Aorta (tissue), 5 donors: ENCODE measurements at regions of chr17 and their contacts with region 1.

Region 1: DNA sequence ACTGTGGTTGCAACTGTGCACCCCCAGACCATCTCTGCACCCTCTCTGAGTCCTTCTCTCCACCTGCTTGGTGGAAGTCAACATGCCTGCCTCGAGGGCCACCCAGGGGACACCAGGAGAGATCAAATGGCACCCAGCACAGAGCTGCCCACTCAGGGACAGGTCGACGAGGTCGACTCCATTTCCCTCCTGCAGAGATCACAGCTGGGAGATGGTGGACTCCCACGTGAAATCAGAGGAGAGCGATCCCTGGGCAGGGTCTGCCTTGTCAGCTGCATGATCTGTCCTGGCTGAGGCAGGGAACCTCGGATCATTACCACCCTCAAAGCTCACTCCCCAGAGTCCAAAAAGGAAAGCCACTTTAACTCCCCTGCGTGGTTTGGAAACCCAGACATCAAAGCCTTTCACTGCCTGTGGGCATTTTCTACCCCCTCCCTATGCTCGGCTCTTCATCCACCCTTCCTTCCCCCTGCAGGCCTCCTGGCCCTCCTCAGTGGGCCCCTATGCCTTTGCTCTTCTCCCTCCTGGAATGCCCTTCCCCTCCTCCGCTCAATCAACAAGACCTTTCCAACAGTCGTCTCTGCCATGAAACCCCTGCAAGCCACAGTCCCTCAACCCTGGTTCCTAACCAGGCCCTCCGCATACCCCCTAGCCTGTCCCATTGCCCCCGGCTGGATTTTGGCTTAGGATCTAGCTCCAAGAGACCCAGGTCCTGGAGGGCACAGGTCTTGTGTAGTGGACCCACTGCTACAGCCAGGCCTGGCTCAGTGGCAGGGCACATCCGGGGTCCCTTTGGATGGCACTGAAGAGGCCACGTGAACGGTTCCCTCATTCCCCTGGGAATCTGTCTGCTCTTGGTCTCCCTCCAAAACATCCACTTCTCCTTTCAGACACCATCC is 103.8 kb upstream of the RPL38 start:
- DNase-seq: no peak
- ATAC-seq: no peak
- H3K4me3 ChIP-seq: no peak overlapping the region
- H3K27ac ChIP-seq: no peak overlapping the region
- H3K4me1 ChIP-seq: no peaks in the 10 kb centered on the region
- H3K27me3 ChIP-seq: no peaks in the 10 kb centered on the region

Region 2: GRCh38 chr17:73855720-73856333 is 243.9 kb before region 1 on chr17:
- intact Hi-C with region 1: loop called in 1 of 2 experiments (anchors 10 kb)
- DNase-seq: no peak
- ATAC-seq: no peak
- H3K4me3 ChIP-seq: no peak overlapping the region
- H3K27ac ChIP-seq: no peak overlapping the region
- H3K4me1 ChIP-seq: no peaks in the 10 kb centered on the region
- H3K27me3 ChIP-seq: no peaks in the 10 kb centered on the region

Region 3: DNA sequence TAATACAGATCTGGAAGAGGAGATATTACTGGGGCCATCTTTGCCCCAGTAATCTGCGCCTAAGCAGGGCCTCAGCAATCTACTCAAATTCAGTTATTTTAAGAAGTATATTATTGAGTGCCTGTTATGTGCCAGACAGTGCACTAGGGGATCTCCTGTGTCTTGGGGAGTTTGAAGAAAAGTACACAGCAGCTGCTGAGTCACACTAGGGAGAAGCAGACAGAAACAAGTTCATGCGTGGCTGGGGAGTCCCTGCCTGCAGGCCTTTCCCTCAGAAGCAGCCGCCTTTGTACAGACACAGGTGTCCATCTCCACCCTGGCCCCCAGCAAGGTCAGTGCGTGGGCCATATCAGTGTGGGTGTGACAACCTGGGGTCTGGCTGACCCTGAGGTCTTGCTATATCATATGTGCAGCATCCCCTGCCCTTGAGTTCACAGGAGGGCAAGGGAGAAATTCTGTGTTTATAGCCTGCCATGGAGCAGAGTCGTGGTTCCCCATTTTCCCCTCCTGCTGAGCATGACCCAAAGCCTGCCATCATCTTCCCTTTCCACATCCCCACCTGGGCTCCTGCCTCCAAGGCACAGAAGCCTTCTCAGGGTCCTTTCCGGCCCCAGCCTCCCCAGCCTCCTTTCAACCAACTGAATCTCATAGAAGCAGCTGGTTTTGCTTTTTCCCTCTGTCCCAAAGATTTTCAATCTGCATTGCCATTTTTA is 225.5 kb before region 1 on chr17:
- intact Hi-C with region 1: no loop called
- DNase-seq: no peak
- ATAC-seq: no peak
- H3K4me3 ChIP-seq: no peak overlapping the region
- H3K27ac ChIP-seq: no peak overlapping the region
- H3K4me1 ChIP-seq: no peaks in the 10 kb centered on the region
- H3K27me3 ChIP-seq: no peaks in the 10 kb centered on the region

Region 4: GRCh38 chr17:73956669-73957465 is 142.8 kb before region 1 on chr17:
- intact Hi-C with region 1: no loop called
- DNase-seq: no peak
- ATAC-seq: no peak
- H3K4me3 ChIP-seq: no peak overlapping the region
- H3K27ac ChIP-seq: no peak overlapping the region
- H3K4me1 ChIP-seq: no peaks in the 10 kb centered on the region
- H3K27me3 ChIP-seq: no peaks in the 10 kb centered on the region

Region 5: DNA sequence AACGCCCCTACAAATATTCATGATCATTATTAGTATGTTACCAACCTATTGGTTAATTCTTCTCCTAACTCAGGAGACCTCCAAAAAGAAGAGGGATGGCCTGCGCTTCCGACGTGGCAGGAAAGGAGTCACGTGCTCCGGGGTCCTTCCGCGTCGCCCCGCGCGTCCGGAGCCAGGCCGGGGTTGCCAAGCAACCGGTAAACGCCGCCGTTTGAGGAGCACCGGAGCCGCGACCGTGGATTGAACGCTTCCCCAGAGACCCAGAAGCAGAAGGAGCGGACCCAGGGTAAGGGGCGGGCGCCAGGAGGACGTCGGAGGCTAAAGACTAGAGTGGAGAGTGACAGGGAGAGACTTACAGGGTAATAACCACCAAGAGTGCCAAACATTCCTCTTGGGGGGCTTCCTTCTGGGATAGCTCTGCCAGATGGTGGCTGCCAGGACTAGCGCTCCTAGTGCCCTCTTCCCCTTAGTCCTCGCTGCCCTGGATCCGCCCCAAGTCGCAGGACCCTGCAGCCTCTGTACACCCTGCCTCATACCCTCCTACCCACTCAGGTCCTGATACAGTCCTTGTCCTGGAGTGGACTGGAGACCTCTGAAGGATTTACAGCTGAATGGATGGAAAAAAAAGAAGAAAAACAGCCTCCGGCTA is 174.5 kb after region 1 on chr17 and contains the start of gene DNAI2:
- intact Hi-C with region 1: no loop called
- DNase-seq: peak in 1 of 2 donors; percentile 82
- ATAC-seq: no peak
- H3K4me3 ChIP-seq: no peak within 1 kb of the TSS
- H3K27ac ChIP-seq: no peak within 1 kb of the TSS
- H3K4me1 ChIP-seq: no peaks in the 10 kb centered on the region
- H3K27me3 ChIP-seq: peaks cover 0 to 3% of the 10 kb centered on the region in 2 donors
- total RNA-seq, gene DNAI2: not detected